Gastrocnemius medialis (tissue), 4 donors: ENCODE measurements at regions of chr15 and their contacts with region 1.

Region 1: DNA sequence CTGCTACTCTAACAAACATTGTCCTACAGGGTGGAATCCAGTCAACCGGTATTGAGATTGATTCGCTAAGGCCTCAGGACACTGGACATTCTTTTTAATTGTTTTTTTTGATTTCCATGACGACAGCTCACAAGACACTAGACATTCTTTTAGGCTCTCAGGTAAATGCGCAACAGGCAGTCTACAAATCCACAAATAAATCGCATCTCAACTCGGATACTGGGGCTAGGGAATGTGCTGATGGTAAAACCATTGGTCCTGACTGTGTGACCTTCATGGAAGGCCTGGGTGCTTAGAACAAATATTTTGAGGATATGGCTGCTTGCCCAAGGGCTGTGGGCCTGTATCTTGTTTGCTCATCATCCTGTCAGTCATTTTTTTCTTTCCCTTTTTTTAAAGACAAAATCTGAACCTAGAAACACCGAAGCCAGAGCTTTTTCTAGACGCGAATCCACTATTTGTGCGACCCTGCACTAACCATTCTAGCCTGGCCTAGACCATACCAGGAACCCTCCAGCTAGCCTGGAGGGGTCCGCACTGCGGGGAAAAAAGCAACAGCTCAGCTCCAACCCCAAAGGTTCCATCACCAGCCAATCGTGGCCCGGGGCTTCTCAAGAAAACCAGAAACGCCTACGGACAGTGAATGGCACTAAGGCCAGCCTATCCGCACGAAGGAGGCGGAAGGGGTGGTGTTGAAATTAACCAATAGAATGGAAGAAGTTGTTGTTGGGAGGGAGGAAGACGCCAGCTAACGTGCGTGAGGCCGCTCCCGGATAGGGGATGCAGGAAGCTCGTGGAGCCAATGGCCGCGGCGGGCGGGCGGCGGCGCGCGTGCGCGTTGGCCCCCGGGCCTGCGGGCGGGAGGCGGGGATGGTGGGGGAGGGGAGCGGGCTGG is 18.1 kb upstream of the CHD2 start:
- DNase-seq: peak; percentile 99 to 100
- ATAC-seq: peak; percentile 92 to 94
- H3K4me3 ChIP-seq: peak overlapping the region; percentile 55 to 71 (median 66)
- H3K27ac ChIP-seq: peak overlapping the region; percentile 91 to 97 (median 92)
- H3K4me1 ChIP-seq: peaks cover 27 to 33% of the 10 kb centered on the region in 2 donors
- H3K27me3 ChIP-seq: no peaks in the 10 kb centered on the region
- CTCF ChIP-seq: no peak
- POLR2A ChIP-seq: peak in 1 of 2 donors; percentile 86

Region 2: GRCh38 chr15:92820236-92821021 is 61.6 kb before region 1 on chr15:
- in situ Hi-C with region 1: no loop called
- intact Hi-C with region 1: loop called (anchors 1 kb)
- DNase-seq: peak; percentile 86 to 92
- ATAC-seq: peak; percentile 93 to 94
- H3K4me3 ChIP-seq: peak overlapping the region; percentile 55 to 66 (median 55)
- H3K27ac ChIP-seq: peak overlapping the region; percentile 86 to 90 (median 89)
- H3K4me1 ChIP-seq: peaks cover 12 to 27% of the 10 kb centered on the region in 2 donors
- H3K27me3 ChIP-seq: no peaks in the 10 kb centered on the region
- CTCF ChIP-seq: peak in 1 of 5 experiments; percentile 31
- POLR2A ChIP-seq: peak; percentile 65 to 87

Region 3: GRCh38 chr15:92831655-92832328 is 50.3 kb before region 1 on chr15:
- in situ Hi-C with region 1: loop called in 1 of 4 experiments (anchors 5 kb)
- intact Hi-C with region 1: loop called (anchors 1 kb)
- DNase-seq: peak; percentile 95 to 98
- ATAC-seq: peak; percentile 97
- H3K4me3 ChIP-seq: peak overlapping the region; percentile 41 to 48 (median 42)
- H3K27ac ChIP-seq: peak overlapping the region; percentile 85 to 92 (median 90)
- H3K4me1 ChIP-seq: peaks cover 37 to 38% of the 10 kb centered on the region in 2 donors
- H3K27me3 ChIP-seq: no peaks in the 10 kb centered on the region
- CTCF ChIP-seq: no peak
- POLR2A ChIP-seq: peak; percentile 76 to 95

Region 4: GRCh38 chr15:92839696-92840095 is 42.4 kb before region 1 on chr15:
- in situ Hi-C with region 1: loop called in 1 of 4 experiments (anchors 5 kb)
- intact Hi-C with region 1: no loop called
- DNase-seq: no peak
- ATAC-seq: no peak
- H3K4me3 ChIP-seq: no peak overlapping the region
- H3K27ac ChIP-seq: no peak overlapping the region
- H3K4me1 ChIP-seq: no peaks in the 10 kb centered on the region
- H3K27me3 ChIP-seq: no peaks in the 10 kb centered on the region
- CTCF ChIP-seq: no peak
- POLR2A ChIP-seq: no peak

Region 5: DNA sequence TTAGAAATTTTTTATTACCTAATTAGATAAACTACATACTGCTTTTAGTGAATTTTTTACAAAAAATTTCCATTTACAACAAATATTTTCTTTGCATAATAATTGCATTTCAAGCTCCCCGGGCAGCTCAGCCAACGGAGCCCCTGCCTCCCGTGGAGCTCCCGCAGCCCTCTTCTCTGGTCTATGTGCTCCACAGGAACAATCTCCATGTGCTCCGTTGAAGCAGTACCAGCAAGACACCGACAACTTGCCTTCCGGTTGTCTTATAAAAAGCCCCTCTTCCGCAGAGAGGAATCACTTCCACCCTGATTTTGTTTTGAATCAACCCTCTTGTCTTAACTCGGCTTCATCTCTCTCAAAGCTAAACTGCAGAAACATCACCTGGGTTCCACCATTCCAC is 28.8 kb before region 1 on chr15:
- in situ Hi-C with region 1: no loop called
- intact Hi-C with region 1: no loop called
- DNase-seq: no peak
- ATAC-seq: no peak
- H3K4me3 ChIP-seq: no peak overlapping the region
- H3K27ac ChIP-seq: no peak overlapping the region
- H3K4me1 ChIP-seq: no peaks in the 10 kb centered on the region
- H3K27me3 ChIP-seq: no peaks in the 10 kb centered on the region
- CTCF ChIP-seq: no peak
- POLR2A ChIP-seq: no peak

Region 6: DNA sequence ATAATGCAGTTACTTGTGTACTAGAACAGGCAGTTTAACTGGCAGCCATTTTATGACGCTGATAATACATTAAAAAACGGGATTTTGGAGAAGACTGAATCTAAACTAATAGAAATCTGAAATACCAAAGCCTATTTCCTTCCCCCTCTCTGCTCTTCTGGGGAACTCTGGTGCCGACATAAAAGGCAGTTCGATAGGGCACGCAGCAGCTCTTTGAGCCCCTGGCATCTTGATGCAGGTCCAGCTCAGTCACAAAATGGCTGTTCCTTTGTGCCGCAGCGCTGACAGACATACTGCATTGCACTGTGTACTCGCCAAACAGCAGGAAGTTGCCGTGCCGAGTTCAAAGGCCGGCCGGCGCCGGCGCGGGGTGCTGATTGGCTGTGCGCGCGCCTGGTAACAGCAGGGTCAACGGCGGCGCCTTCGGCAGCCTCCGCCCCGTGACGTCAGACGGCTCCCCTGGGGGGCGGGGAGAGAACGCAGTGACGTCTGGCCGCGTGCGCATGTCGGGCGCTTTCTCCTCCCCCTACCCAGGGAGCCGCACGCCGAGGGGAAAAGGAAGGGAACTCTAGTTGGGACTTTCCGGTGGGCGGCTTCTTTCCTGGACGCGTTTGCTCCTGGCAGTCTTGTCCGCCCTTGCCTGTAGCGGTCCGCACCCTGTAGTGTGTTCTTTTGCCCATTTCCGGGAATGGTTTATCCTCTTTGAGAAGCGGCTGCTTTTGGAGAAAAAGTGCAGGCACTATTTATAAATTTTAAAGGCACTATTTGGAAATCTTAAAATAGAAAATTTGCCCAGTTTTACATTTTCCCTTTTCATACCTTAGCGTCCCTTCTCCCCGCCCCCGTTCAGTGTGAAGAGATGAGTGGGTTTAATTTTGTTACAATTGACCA is 22.1 kb after region 1 on chr15:
- in situ Hi-C with region 1: no loop called
- intact Hi-C with region 1: loop called (anchors 1 kb)
- DNase-seq: peak; percentile 98 to 99
- ATAC-seq: peak; percentile 80 to 83
- H3K4me3 ChIP-seq: peak overlapping the region; percentile 64 to 76 (median 71)
- H3K27ac ChIP-seq: peak overlapping the region; percentile 94 to 97 (median 96)
- H3K4me1 ChIP-seq: peaks cover 51 to 60% of the 10 kb centered on the region in 2 donors
- H3K27me3 ChIP-seq: no peaks in the 10 kb centered on the region
- CTCF ChIP-seq: no peak
- POLR2A ChIP-seq: peak; percentile 94 to 98

Region 7: GRCh38 chr15:92917606-92918407 is 35.8 kb after region 1 on chr15:
- in situ Hi-C with region 1: no loop called
- intact Hi-C with region 1: loop called (anchors 1 kb)
- DNase-seq: peak; percentile 87 to 94
- ATAC-seq: peak; percentile 57 to 64
- H3K4me3 ChIP-seq: peak overlapping the region; percentile 3 to 21 (median 12)
- H3K27ac ChIP-seq: peak overlapping the region; percentile 91 to 97 (median 96)
- H3K4me1 ChIP-seq: peaks cover 86 to 91% of the 10 kb centered on the region in 2 donors
- H3K27me3 ChIP-seq: no peaks in the 10 kb centered on the region
- CTCF ChIP-seq: peak; percentile 88 to 98 (median 95)
- POLR2A ChIP-seq: no peak

Region 8: DNA sequence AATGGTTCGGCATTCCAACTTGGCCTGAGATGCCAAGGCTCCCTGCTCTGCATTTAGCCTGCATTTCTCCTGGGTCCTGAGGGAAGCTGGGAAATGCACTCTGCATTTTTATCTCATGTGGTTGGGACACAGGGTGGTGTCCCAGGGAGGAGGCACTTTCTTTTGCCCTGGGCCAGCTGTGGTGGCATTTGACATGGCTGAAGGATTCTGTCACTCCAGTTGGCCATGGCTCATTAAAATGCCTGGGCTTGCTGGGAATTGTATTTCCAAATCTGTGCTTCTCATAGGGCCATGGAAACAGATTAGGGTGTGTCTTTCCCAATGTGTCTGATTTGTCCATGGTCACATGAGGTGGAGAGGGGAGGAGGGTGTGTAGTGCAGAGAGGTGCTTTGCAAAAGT is 335.3 kb after region 1 on chr15:
- in situ Hi-C with region 1: no loop called
- intact Hi-C with region 1: loop called (anchors 10 kb)
- DNase-seq: peak; percentile 76 to 89
- ATAC-seq: peak; percentile 70 to 85
- H3K4me3 ChIP-seq: no peak overlapping the region
- H3K27ac ChIP-seq: peak overlapping the region; percentile 85 to 90 (median 87)
- H3K4me1 ChIP-seq: peaks cover 24 to 49% of the 10 kb centered on the region in 2 donors
- H3K27me3 ChIP-seq: no peaks in the 10 kb centered on the region
- CTCF ChIP-seq: peak in 1 of 5 experiments; percentile 11
- POLR2A ChIP-seq: no peak